ENCODE measurements at regions of chr20 and their contacts with region 1.

Region 1: DNA sequence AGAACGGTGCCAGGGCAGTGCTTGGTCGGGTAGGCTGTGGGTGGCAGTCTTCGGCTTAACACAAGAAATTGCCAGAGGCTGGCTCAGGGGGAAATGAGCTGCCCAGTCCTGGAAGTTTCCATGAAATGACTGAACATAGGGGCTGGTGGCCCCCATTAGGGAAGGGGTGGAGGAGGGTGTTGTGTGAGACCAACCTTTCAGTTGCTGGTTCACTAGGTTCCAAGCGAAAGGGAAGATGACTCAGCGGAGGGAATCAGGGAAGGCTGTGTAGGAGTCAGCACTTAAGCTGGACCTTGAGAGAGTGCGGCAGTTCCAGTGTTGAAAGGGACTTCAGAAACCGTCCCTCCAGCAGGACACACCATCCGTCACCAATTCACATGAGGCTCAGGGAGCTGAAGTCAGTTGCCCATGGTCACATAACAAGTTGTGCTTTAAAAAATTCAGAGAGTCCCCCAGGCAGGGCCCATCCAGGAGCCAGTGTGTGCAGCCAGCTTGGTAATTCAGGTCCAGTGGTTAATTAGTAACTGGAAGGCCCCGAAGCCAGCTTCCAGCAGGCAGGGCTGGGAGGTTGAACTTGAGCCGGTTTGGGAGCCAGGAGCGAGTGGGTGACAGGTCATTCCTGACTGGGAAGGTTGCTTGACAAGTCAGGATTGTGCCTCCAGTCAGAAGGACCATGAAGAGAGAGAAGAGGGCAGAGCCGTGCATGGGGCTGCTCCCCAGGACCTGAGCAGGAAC is at the start of gene SGK2:
- DNase-seq: peak; percentile 41 to 53
- H3K4me3 ChIP-seq: no peak within 1 kb of the TSS
- H3K27ac ChIP-seq: peak within 1 kb of the TSS; percentile 52
- H3K4me1 ChIP-seq: peaks cover 20% of the 10 kb centered on the region
- H3K27me3 ChIP-seq: no peaks in the 10 kb centered on the region
- CTCF ChIP-seq: no peak
- total RNA-seq, gene SGK2: 3.1 and 3.7 TPM in 2 replicates

Region 2: GRCh38 chr20:42565235-42565995 is 993.2 kb before region 1 on chr20:
- CTCF ChIA-PET with region 1: no interaction called
- POLR2A ChIA-PET with region 1: interaction called, 24 read pairs
- intact Hi-C with region 1: no loop called
- DNase-seq: no peak
- H3K4me3 ChIP-seq: no peak overlapping the region
- H3K27ac ChIP-seq: no peak overlapping the region
- H3K4me1 ChIP-seq: no peaks in the 10 kb centered on the region
- H3K27me3 ChIP-seq: peaks cover 17% of the 10 kb centered on the region
- CTCF ChIP-seq: no peak

Region 3: DNA sequence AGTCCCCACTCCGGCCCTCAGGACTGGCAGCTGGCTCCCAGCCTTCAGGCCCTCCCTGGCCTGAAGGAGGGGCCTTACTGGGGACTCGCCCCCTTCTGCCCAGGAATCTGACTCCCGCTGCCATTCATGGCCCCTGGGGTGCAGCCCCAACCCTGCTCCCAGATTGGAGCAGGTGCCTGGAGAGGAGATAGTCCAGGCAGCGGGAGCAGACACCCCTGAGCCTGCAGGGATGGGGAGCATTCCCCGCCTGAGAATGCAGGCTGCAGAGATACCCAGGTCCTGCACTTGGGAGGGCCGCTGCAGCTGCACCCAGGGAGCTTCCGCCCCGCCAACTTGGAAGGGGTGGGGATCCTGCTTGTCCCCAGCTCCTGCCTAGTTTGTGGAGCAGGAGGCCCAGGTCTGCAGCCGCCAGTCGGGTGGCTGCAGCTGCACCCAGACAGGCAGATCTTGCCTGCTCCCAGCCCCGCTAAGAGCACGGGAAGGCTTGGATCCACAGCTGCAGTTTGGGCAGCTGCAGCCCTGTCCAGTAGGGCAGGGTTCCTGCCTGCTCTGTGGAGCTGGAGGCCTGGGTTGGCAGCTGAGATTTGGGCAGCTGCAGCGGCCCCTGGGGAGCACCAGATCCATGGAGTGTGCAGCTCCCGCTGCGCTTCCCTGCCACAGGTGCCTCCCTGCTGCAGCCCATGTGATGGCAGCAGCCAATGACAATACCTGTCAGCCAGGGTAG is 163.0 kb after region 1 on chr20:
- CTCF ChIA-PET with region 1: no interaction called
- POLR2A ChIA-PET with region 1: interaction called, 20 read pairs
- intact Hi-C with region 1: no loop called
- DNase-seq: no peak
- H3K4me3 ChIP-seq: no peak overlapping the region
- H3K27ac ChIP-seq: no peak overlapping the region
- H3K4me1 ChIP-seq: no peaks in the 10 kb centered on the region
- H3K27me3 ChIP-seq: no peaks in the 10 kb centered on the region
- CTCF ChIP-seq: no peak

Region 4: DNA sequence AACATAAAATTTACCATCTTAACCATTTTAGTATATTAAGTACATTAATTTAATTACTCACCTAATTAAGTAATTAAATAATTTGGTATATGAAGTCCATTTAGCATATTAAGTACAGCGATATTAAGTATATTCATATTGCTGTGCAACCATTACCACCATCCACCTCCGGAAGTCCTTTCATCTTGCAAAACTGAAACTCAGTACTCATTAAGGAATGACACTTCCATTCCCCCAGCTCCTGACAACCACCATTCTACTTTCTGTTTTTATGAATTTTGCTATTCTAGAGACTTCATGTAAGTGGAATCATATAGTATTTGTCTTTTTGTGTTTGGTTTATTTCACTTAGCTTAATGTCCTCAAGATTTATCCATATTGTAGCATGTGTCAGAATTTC is 229.4 kb after region 1 on chr20:
- CTCF ChIA-PET with region 1: interaction called, 13 read pairs
- POLR2A ChIA-PET with region 1: no interaction called
- intact Hi-C with region 1: no loop called
- DNase-seq: no peak
- H3K4me3 ChIP-seq: no peak overlapping the region
- H3K27ac ChIP-seq: no peak overlapping the region
- H3K4me1 ChIP-seq: peaks cover 1% of the 10 kb centered on the region; the same call in 1 of the 2 replicates
- H3K27me3 ChIP-seq: no peaks in the 10 kb centered on the region
- CTCF ChIP-seq: no peak

Measured in PC-9 (cell line).